CD4-positive, alpha-beta T cell (primary cell): ENCODE measurements at regions of chr9 and their contacts with region 1.

Region 1: DNA sequence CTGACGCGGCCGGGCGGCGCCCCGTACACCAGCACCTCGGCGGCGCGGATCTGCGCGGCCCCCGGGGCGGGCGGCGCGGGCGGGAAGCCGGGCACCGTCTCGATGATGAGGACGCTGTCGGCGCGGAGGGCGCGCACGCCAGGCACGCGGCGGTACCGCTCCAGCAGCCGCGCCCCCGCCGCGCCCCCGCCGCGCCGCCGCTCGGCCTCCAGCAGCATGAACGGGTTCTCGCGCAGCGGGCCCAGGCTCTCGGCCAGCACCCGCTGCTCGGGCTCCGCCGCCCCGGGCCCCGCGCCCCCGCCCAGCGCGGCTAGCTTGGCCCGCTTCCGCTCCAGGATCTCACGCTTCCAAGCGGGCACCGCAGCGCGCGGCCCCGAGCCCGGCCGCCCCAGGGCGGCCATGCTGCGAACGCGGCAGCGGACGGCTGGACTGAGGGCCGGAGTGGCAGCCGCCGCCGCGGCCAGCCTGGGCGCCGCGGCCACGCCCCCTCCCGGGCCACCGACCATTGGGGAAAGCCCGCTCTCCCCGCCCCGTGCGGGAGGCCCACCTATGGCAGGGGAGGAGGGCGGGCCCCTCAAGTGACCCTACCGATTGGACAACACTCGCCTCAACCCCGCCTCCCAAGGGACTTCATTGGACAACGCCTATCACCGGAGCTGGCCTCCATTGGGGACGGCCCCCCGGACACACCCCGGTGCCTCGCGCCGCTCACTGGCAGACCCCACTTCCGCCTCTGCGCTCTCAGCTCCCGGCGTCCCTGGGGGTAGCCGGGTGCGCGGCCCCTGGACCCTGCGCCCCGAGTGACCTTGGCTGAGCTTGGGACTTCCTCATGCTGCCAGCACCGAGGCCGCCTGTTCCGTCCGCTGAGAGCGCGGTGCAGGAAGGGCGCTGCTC is at the start of gene TPRN:
- DNase-seq: peak; percentile 93 to 99 (median 98)
- ATAC-seq: peak; percentile 94
- H3K4me3 ChIP-seq: peak within 1 kb of the TSS; percentile 87
- H3K4me3 Mint-ChIP-seq: peak within 1 kb of the TSS; percentile 93
- H3K27ac ChIP-seq: peak within 1 kb of the TSS; percentile 72 to 76
- H3K27ac Mint-ChIP-seq: peak within 1 kb of the TSS; percentile 84
- H3K4me1 ChIP-seq: peaks cover 48% of the 10 kb centered on the region
- H3K4me1 Mint-ChIP-seq: peaks cover 23% of the 10 kb centered on the region
- H3K27me3 ChIP-seq: no peaks in the 10 kb centered on the region
- H3K27me3 Mint-ChIP-seq: no peaks in the 10 kb centered on the region
- CTCF ChIP-seq: no peak
- total RNA-seq, gene TPRN: 6.1 to 8.6 TPM

Region 2: DNA sequence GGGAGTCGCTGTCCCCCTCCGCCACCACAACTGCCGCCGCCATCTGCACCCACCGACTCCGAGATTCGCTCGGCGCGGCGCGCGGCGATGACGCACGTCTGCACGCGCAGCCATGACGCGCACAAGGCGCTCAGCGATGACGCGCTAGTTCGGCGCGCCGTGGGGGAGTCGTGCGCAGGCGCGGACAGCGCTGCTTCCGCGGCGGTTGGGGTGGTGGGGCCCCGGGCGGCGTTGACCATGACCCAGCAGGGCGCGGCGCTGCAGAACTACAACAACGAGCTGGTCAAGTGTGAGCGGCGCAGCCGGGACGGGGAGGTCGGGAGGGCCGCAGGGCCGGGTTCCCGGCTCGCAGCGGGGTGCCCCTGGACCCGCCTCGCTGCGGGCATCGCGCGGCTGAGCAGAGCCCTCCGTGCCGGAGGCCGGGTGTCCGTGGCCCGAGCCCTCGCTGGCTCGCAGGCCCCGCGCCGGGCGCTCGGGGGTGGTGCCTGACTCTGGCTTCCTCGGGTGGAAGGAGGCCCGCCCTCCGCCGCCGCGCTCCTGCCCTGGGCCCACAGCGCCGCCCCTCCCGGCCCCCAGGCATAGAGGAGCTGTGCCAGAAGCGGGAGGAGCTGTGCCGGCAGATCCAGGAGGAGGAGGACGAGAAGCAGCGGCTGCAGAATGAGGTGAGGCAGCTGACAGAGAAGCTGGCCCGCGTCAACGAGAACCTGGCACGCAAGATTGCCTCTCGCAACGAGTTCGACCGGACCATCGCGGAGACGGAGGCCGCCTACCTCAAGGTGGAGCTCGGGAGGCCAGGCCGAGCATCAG is 11.9 kb before region 1 on chr9 and contains the starts of genes ANAPC2 and SSNA1:
- CTCF ChIA-PET with region 1: interaction called, 9 read pairs
- POLR2A ChIA-PET with region 1: interaction called, 39 read pairs
- intact Hi-C with region 1: loop called in 1 of 2 experiments (anchors 1 kb)
- DNase-seq: peak; percentile 83 to 98 (median 90)
- ATAC-seq: peak; percentile 79
- H3K4me3 ChIP-seq: peak within 1 kb of the TSS; percentile 100
- H3K4me3 Mint-ChIP-seq: peak within 1 kb of the TSS; percentile 94
- H3K27ac ChIP-seq: peak within 1 kb of the TSS; percentile 86 to 92
- H3K27ac Mint-ChIP-seq: peak within 1 kb of the TSS; percentile 79
- H3K4me1 ChIP-seq: peaks cover 50% of the 10 kb centered on the region
- H3K4me1 Mint-ChIP-seq: peaks cover 29% of the 10 kb centered on the region
- H3K27me3 ChIP-seq: no peaks in the 10 kb centered on the region
- H3K27me3 Mint-ChIP-seq: no peaks in the 10 kb centered on the region
- CTCF ChIP-seq: peak; percentile 48
- total RNA-seq, gene ANAPC2: 144 to 149 TPM
- total RNA-seq, gene SSNA1: 30.1 to 30.5 TPM